ENCODE measurements at regions of chr6 and their contacts with region 1.

Region 1: DNA sequence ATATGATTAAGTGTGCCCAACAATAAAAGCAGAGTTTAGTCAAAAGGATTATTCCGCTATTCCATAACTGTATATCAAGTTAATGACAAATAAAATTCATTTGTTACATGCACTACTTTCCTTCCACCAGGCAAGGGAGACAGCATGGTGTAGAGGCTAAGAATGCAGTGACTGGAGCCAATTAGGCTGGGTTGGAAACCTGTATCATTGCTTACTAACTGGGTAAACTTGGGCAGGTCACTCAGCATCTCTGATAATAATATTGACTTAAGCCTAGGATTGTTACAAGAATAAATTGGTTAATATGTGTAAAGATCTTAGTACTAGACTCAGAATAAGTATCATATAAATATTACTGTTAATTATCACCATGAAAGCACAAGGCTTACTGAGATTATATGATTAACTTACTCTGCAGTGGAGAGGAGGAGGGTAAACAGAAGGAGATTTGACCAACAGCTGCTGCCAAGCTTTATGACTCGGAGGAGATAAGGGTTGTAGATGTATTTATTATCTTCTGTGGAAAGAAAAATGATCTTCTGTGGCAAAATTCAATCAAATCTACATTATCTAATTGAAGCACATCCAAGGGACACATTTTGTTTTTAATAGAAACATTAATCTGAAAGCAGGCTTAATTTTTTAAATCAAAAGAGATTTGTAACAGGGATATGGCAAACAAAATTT is 1459.9 kb downstream of the GRIK2 start:
- DNase-seq: no peak
- H3K4me3 Mint-ChIP-seq: no peak overlapping the region
- H3K27ac Mint-ChIP-seq: no peak overlapping the region
- H3K4me1 Mint-ChIP-seq: no peaks in the 10 kb centered on the region
- H3K27me3 Mint-ChIP-seq: no peaks in the 10 kb centered on the region
- CTCF ChIP-seq: no peak

Region 2: GRCh38 chr6:102885165-102885564 is 31.8 kb after region 1 on chr6:
- CTCF ChIA-PET with region 1: no interaction called
- intact Hi-C with region 1: no loop called
- DNase-seq: no peak
- H3K4me3 Mint-ChIP-seq: no peak overlapping the region
- H3K27ac Mint-ChIP-seq: no peak overlapping the region
- H3K4me1 Mint-ChIP-seq: no peaks in the 10 kb centered on the region
- H3K27me3 Mint-ChIP-seq: no peaks in the 10 kb centered on the region
- CTCF ChIP-seq: no peak

Region 3: GRCh38 chr6:103122766-103123601 is 269.6 kb after region 1 on chr6:
- CTCF ChIA-PET with region 1: interaction called, 24 read pairs
- intact Hi-C with region 1: loop called (anchors 1 kb)
- DNase-seq: peak; percentile 79
- H3K4me3 Mint-ChIP-seq: no peak overlapping the region
- H3K27ac Mint-ChIP-seq: no peak overlapping the region
- H3K4me1 Mint-ChIP-seq: no peaks in the 10 kb centered on the region
- H3K27me3 Mint-ChIP-seq: no peaks in the 10 kb centered on the region
- CTCF ChIP-seq: peak; percentile 68

Measured in Calu3 (cell line).